Ascending aorta (tissue), 2 donors: ENCODE measurements at regions of chr6 and their contacts with region 1.

Region 1: DNA sequence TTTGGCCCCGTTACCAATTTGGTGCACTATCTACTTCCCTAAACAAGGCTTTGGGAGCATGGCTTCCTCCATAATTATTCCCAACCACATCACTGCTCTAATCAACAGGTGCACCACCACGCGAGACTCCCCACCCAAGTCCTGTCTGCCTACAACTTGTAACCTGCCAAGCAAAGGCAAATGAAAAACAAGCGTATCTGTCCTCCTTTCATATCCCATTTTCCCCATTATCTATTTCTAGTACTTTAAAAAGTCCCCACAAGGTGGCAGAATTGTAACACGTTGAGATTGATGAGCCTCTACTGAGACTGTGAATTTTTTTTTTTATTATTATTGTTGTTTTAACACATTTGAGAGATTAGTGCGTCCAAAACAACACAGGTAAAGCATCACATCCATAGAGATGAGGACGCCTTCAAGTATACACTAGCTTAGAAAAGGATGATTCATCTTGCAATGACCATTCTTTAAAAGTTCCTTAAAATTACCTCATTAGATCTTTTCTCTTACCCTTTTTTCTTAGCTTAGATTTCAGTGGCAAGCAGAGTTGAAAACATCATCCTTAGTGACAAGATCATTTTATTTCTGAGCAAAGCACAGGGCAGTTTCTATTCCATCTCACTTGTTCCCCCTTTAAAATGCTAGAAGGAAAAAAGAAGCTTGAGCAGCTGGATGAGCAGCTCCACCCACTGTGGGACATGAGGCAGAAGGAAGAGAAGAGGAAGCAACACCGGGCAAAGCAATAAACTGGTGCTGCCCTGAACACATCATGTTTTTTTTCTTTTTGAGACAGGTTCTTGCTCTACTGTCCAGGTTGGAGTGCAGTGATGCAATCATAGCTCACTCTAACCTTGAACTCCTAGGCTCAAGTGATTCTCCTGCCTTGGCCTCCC is 210.8 kb downstream of the ARHGAP18 start:
- DNase-seq: no peak
- H3K4me3 ChIP-seq: no peak overlapping the region
- H3K27ac ChIP-seq: no peak overlapping the region
- H3K4me1 ChIP-seq: no peaks in the 10 kb centered on the region
- H3K27me3 ChIP-seq: no peaks in the 10 kb centered on the region
- CTCF ChIP-seq: peak; percentile 26 to 63 (median 44)

Region 2: DNA sequence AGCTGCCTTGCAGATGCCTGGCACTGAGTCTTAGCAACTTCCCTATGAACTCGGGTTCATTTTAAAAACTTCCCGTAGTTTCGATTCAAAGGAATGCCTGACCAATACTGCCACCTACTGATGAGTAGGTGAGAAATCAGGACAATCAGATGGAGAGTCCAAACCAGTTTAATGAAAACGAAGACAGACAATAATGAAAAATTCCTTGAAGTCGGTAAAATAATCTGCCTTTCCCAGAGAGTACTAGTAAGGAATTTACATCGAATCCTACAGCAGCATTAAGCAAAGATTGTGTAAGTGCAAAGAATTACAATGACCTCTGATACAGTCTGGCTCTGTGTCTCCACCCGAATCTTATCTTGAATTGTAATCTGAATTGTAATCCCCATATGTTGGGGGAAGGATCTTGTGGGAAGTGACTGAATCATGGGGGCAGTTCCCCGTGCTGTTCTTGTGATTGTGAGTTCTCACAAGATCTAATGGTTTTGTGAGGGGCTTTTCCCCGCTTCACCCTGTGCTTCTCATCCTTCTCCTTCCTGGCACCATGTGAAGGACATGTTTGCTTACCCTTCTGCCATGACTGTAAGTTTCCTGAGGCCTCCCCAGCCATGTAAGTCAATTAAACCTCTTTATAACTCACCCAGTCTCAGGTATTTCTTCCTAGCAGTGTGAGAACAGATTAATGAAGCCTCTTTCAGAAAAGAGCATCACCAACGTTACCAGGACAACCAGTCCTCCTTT is 76.4 kb after region 1 on chr6:
- intact Hi-C with region 1: loop called (anchors 2 kb)
- DNase-seq: no peak
- H3K4me3 ChIP-seq: peak overlapping the region; percentile 31 to 52
- H3K27ac ChIP-seq: no peak overlapping the region
- H3K4me1 ChIP-seq: no peaks in the 10 kb centered on the region
- H3K27me3 ChIP-seq: no peaks in the 10 kb centered on the region
- CTCF ChIP-seq: peak; percentile 49 to 80 (median 55)

Region 3: GRCh38 chr6:130020907-130021629 is 521.9 kb after region 1 on chr6:
- intact Hi-C with region 1: loop called (anchors 5 kb)
- DNase-seq: peak; percentile 45 to 92
- H3K4me3 ChIP-seq: peak overlapping the region; percentile 79 to 93
- H3K27ac ChIP-seq: peak overlapping the region; percentile 70 to 82
- H3K4me1 ChIP-seq: no peaks in the 10 kb centered on the region
- H3K27me3 ChIP-seq: no peaks in the 10 kb centered on the region
- CTCF ChIP-seq: peak; percentile 77 to 83 (median 79)

Region 4: DNA sequence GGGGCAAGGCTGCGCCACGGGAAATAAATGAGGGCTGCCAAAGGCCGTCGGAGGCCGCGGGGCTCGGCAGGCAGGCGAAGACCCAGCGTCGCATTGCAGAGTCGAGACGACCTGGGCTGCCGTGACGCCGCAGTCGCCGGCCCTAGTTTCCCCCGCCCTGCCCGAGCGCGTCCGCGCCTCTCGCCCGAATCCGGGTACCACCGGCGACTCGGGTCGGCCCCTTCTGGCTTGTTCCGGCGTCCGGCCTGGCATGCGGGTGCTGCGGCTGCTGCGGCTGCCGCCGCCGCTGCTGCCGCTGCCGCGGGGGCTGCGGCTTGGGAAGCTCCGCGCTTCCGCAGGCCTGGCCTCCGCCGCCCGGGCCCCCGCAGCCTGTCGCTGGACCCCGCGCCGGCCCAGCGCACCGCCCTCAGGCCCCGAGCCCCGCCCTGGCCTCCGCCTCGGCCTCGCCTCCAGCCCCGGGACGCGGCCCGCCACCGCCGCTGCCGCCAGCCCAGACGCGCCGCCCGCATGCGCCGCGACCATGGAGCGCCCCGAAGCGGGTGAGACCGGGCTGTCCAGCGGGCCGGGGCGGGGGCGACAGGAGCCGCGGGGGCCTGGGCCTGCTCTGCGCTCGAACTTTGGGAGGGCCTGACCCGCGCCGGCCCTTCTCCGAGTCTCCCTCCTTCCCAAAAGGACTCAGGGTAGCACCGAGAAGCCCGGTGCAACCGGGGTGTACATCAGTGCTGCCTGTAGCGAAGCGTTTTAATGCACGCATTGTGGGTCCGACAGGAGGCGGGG is 1636.2 kb after region 1 on chr6 and contains the start of gene AKAP7:
- intact Hi-C with region 1: loop called (anchors 10 kb)
- DNase-seq: peak in 1 of 2 donors; percentile 81
- H3K4me3 ChIP-seq: peak within 1 kb of the TSS; percentile 83 to 98
- H3K27ac ChIP-seq: peak within 1 kb of the TSS; percentile 87 to 94
- H3K4me1 ChIP-seq: no peaks in the 10 kb centered on the region
- H3K27me3 ChIP-seq: no peaks in the 10 kb centered on the region
- CTCF ChIP-seq: no peak
- total RNA-seq, gene AKAP7: 1.3 TPM